HCT116 (cell line): ENCODE measurements at regions of chr3 and their contacts with region 1.

Region 1: GRCh38 chr3:107846279-107846852 is 244.5 kb downstream of the CD47 start:
- DNase-seq: peak; percentile 64
- ATAC-seq: peak; percentile 100
- H3K4me3 ChIP-seq: no peak overlapping the region
- H3K27ac ChIP-seq: no peak overlapping the region
- H3K4me1 ChIP-seq: peaks cover 0 to 3% of the 10 kb centered on the region in 2 experiments; a peak in 1 of 4 replicates
- H3K27me3 ChIP-seq: no peaks in the 10 kb centered on the region
- CTCF ChIP-seq: peak; percentile 62 to 79 (median 74)
- POLR2A ChIP-seq: no peak
- RAD21 ChIP-seq: peak; percentile 70

Region 2: GRCh38 chr3:107574650-107575049 is 271.7 kb before region 1 on chr3:
- CTCF ChIA-PET with region 1: interaction called, 6 read pairs
- POLR2A ChIA-PET with region 1: no interaction called
- RAD21 ChIA-PET with region 1: no interaction called
- intact Hi-C with region 1: loop called (anchors 2 kb)
- DNase-seq: peak; percentile 2
- ATAC-seq: peak; percentile 86
- H3K4me3 ChIP-seq: no peak overlapping the region
- H3K27ac ChIP-seq: no peak overlapping the region
- H3K4me1 ChIP-seq: no peaks in the 10 kb centered on the region
- H3K27me3 ChIP-seq: no peaks in the 10 kb centered on the region
- CTCF ChIP-seq: peak; percentile 38 to 60 (median 59); a peak in 5 of 6 replicates
- POLR2A ChIP-seq: no peak
- RAD21 ChIP-seq: peak; percentile 60

Region 3: GRCh38 chr3:107676469-107677309 is 169.7 kb before region 1 on chr3:
- CTCF ChIA-PET with region 1: interaction called, 4 read pairs
- POLR2A ChIA-PET with region 1: no interaction called
- RAD21 ChIA-PET with region 1: no interaction called
- intact Hi-C with region 1: loop called (anchors 2 kb)
- DNase-seq: peak; percentile 4
- ATAC-seq: peak; percentile 64
- H3K4me3 ChIP-seq: no peak overlapping the region
- H3K27ac ChIP-seq: no peak overlapping the region
- H3K4me1 ChIP-seq: no peaks in the 10 kb centered on the region
- H3K27me3 ChIP-seq: no peaks in the 10 kb centered on the region
- CTCF ChIP-seq: peak; percentile 31 to 58 (median 35); a peak in 5 of 6 replicates
- POLR2A ChIP-seq: no peak
- RAD21 ChIP-seq: peak; percentile 54

Region 4: DNA sequence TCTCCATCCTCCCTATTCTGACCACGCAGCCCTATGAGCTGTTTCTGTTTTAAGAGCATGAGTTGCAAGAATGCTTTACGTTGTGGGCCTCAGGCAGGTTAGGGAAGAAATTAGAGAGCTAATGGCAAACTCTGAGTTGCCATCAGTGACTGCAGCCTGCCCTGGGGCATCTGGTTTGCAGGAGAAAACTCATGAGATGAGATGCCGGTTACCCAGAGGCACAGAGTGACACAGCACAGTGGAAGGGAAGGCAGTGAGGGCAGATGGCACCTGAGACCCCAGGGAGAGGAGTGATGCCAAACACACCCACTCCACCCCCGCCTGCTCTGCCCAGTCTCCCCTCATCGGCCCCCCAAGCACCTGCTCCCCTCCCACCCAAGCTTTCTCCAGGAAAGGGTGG is 20.8 kb before region 1 on chr3:
- CTCF ChIA-PET with region 1: no interaction called
- POLR2A ChIA-PET with region 1: no interaction called
- RAD21 ChIA-PET with region 1: no interaction called
- intact Hi-C with region 1: no loop called
- DNase-seq: no peak
- ATAC-seq: no peak
- H3K4me3 ChIP-seq: no peak overlapping the region
- H3K27ac ChIP-seq: no peak overlapping the region
- H3K4me1 ChIP-seq: no peaks in the 10 kb centered on the region
- H3K27me3 ChIP-seq: no peaks in the 10 kb centered on the region
- CTCF ChIP-seq: no peak
- POLR2A ChIP-seq: no peak
- RAD21 ChIP-seq: no peak

Region 5: DNA sequence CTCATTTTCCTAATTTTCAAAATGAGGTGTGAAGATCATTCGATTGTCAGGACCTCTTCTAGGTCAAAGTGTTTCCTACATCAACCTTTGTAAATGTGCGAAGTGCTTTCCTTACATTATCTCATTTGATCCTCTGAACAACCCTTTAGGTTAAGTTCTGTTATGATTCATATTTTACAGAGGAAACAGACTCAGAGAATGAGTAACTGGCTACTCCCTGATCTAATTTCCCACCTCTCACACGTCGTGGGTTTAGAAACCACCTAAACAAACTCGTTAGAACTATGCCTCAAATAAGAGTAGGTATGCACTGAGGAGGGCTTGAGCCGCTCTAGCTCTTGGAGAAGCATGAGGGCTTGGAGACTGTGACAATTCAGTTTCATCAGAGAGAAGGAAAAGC is 95.9 kb after region 1 on chr3:
- CTCF ChIA-PET with region 1: no interaction called
- POLR2A ChIA-PET with region 1: no interaction called
- RAD21 ChIA-PET with region 1: no interaction called
- intact Hi-C with region 1: no loop called
- DNase-seq: no peak
- ATAC-seq: no peak
- H3K4me3 ChIP-seq: no peak overlapping the region
- H3K27ac ChIP-seq: no peak overlapping the region
- H3K4me1 ChIP-seq: no peaks in the 10 kb centered on the region
- H3K27me3 ChIP-seq: no peaks in the 10 kb centered on the region
- CTCF ChIP-seq: no peak
- POLR2A ChIP-seq: no peak
- RAD21 ChIP-seq: no peak

Region 6: DNA sequence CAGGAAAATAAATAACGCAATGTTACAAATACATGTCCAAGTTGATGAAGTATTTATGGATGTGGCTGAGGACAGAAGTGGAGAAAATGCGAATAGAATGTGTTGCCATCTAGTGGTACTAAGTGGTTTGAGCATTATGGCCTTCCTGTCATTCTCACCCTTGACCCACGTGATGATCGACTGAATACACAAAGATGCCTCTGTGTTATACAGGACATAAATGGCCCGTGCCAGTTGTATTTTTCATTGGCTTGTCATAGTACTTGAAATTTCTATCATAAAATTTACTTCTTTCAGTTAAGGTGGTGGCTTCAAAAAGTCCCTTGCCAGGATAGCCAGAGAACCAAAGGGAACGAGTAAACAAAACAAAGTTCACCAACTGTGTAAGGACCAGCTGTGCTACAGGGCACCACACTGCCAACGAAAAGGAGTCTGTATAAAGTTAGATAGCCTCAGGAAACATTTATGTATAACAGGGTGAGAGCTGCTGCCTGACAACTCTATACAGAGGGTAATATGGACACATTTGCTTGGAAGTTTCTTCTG is 560.4 kb after region 1 on chr3:
- CTCF ChIA-PET with region 1: no interaction called
- POLR2A ChIA-PET with region 1: no interaction called
- RAD21 ChIA-PET with region 1: no interaction called
- intact Hi-C with region 1: loop called (anchors 5 kb)
- DNase-seq: peak; percentile 52
- ATAC-seq: peak; percentile 99
- H3K4me3 ChIP-seq: no peak overlapping the region
- H3K27ac ChIP-seq: no peak overlapping the region
- H3K4me1 ChIP-seq: no peaks in the 10 kb centered on the region
- H3K27me3 ChIP-seq: no peaks in the 10 kb centered on the region
- CTCF ChIP-seq: peak; percentile 50 to 79 (median 74); a peak in 5 of 6 replicates
- POLR2A ChIP-seq: no peak
- RAD21 ChIP-seq: peak; percentile 78